ENCODE measurements at regions of chr5 and their contacts with region 1.

Region 1: DNA sequence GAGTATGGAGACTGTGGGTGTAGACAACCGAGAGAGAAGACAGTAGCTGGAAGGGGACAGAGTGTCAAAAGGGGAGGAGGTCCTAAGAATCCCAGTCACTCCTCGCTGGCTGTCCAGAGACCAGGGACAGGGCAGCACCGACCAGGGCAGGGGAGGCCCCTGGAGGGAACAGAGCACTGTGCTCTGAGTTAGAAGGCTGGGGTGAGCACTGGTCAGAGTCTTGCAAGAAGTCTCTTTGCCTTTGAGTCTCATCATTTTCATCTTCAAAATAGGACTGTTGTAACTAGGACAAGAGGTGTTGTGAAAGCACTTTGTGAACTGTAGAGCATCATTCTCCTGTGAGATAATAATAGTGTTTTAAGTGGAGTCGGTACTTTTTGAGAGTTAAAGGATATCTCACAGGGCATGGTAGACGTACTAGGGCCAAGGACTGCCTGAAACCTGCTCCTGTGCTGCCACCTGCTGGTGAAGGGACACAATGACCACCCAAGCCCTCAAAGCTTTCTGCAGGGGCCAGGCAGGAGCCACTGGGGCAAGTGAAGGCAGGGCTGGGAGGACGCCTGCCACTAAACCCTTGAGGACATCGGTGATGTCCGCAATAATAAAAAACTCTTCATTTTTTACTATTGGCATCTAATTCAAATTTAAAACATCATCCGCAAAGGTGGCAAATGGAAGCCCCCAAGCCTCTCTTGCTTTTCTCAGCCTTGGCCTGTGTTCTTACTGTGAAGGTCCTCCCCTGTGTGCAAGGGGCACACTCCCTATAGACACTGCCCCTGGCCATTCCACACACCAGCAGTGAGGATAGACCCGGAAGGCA is 28.2 kb downstream of the SLC6A7 start:
- DNase-seq: peak; percentile 81 to 86
- ATAC-seq: peak; percentile 89 to 97
- H3K4me3 ChIP-seq: no peak overlapping the region
- H3K27ac ChIP-seq: 0 out of 6 replicates have a peak overlapping the region, but pooled peaks of 1 of the 2 experiments have one; percentile 28
- H3K4me1 ChIP-seq: no peaks in the 10 kb centered on the region
- CTCF ChIP-seq: peak; percentile 90
- EP300 ChIP-seq: no peak
- POLR2A ChIP-seq: no peak
- RAD21 ChIP-seq: peak; percentile 92 to 94

Region 2: GRCh38 chr5:150036513-150036912 is 181.6 kb before region 1 on chr5:
- CTCF ChIA-PET with region 1: interaction called, 11 read pairs
- POLR2A ChIA-PET with region 1: no interaction called
- DNase-seq: peak; percentile 58 to 73
- ATAC-seq: peak; percentile 98 to 99
- H3K4me3 ChIP-seq: no peak overlapping the region
- H3K27ac ChIP-seq: peak overlapping the region in 1 of 2 experiments; percentile 59; a peak in 2 of 6 replicates
- H3K4me1 ChIP-seq: peaks cover 19% of the 10 kb centered on the region
- CTCF ChIP-seq: no peak
- EP300 ChIP-seq: no peak
- POLR2A ChIP-seq: no peak
- RAD21 ChIP-seq: no peak

Region 3: DNA sequence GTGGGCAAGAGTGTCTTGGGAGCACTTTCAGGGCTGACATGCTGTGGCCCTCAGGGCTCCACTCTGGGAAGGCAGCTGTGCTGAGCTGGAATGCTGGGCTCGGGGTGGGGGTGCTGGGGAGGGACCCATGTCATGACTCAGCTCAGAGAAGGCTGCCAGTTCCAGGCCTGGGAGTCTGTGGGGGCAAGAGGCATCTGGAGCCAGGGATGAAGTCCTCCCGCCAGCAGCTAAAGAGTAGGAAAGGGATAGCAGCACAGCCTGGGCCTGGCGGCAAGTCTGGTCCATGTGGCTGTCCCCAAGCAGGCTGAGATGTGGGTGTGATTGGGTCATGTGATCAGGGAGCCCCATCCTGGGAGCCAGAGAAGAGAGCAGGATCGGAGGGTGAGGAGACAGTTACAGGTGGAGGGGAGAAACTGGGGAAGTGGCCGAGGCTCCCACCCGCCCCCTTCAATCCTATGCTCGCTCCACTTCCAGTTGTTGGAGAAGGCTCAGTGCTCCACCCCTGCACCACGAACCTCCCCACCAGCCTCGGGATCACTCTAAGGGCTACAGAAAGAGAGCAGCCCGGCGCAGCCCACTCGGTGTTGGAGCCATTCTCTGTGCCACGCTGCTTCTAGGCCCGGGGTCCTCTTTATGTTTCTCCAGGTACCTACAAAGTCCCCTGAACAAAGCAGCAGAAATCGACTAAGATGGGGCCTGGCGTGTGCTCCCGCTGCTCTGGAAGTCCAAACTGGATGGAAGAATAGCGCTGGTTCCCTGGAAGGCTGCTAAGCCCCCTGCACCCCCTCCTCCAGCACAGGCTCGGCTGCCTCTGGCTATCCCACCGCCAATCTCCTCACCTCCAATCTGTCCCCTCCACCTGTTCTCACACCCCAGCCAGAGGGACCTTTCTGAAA is 74.5 kb before region 1 on chr5:
- CTCF ChIA-PET with region 1: interaction called, 32 read pairs
- POLR2A ChIA-PET with region 1: no interaction called
- DNase-seq: peak; percentile 57 to 62
- ATAC-seq: peak; percentile 75
- H3K4me3 ChIP-seq: no peak overlapping the region
- H3K27ac ChIP-seq: peak overlapping the region; percentile 93 to 98
- H3K4me1 ChIP-seq: peaks cover 57% of the 10 kb centered on the region
- CTCF ChIP-seq: no peak
- EP300 ChIP-seq: peak in 1 of 2 experiments; percentile 28; a peak in 1 of 5 replicates
- POLR2A ChIP-seq: no peak
- RAD21 ChIP-seq: no peak

Region 4: GRCh38 chr5:150167908-150168307 is 50.2 kb before region 1 on chr5:
- CTCF ChIA-PET with region 1: interaction called, 140 read pairs
- POLR2A ChIA-PET with region 1: no interaction called
- DNase-seq: no peak
- ATAC-seq: no peak
- H3K4me3 ChIP-seq: no peak overlapping the region
- H3K27ac ChIP-seq: no peak overlapping the region
- H3K4me1 ChIP-seq: peaks cover 5% of the 10 kb centered on the region; the same call in 1 of the 3 replicates
- CTCF ChIP-seq: no peak
- EP300 ChIP-seq: no peak
- POLR2A ChIP-seq: no peak
- RAD21 ChIP-seq: no peak

Region 5: GRCh38 chr5:150189728-150190502 is 28.2 kb before region 1 on chr5 and contains the start of gene SLC6A7:
- CTCF ChIA-PET with region 1: interaction called, 13 read pairs
- POLR2A ChIA-PET with region 1: no interaction called
- DNase-seq: no peak
- ATAC-seq: no peak
- H3K4me3 ChIP-seq: no peak within 1 kb of the TSS
- H3K27ac ChIP-seq: no peak within 1 kb of the TSS
- H3K4me1 ChIP-seq: no peaks in the 10 kb centered on the region
- CTCF ChIP-seq: no peak
- EP300 ChIP-seq: no peak
- POLR2A ChIP-seq: no peak
- RAD21 ChIP-seq: no peak
- polyA plus RNA-seq, gene SLC6A7: not detected in 2 replicates